Activated CD4-positive, alpha-beta T cell treated with anti-CD3 and anti-CD28 coated beads for 36 hours (primary cell): ENCODE measurements at regions of chr9 and their contacts with region 1.

Region 1: DNA sequence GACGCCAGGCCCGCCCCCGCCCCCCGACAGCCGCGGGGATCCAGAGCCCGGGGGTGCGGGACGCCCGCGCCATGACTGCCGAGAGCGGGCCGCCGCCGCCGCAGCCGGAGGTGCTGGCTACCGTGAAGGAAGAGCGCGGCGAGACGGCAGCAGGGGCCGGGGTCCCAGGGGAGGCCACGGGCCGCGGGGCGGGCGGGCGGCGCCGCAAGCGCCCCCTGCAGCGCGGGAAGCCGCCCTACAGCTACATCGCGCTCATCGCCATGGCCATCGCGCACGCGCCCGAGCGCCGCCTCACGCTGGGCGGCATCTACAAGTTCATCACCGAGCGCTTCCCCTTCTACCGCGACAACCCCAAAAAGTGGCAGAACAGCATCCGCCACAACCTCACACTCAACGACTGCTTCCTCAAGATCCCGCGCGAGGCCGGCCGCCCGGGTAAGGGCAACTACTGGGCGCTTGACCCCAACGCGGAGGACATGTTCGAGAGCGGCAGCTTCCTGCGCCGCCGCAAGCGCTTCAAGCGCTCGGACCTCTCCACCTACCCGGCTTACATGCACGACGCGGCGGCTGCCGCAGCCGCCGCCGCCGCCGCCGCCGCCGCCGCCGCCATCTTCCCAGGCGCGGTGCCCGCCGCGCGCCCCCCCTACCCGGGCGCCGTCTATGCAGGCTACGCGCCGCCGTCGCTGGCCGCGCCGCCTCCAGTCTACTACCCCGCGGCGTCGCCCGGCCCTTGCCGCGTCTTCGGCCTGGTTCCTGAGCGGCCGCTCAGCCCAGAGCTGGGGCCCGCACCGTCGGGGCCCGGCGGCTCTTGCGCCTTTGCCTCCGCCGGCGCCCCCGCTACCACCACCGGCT is 1.0 kb downstream of the FOXE1 start:
- DNase-seq: peak; percentile 85
- ATAC-seq: peak; percentile 88
- H3K4me3 Mint-ChIP-seq: peak overlapping the region; percentile 82
- H3K27ac Mint-ChIP-seq: no peak overlapping the region
- H3K4me1 Mint-ChIP-seq: peaks cover 23% of the 10 kb centered on the region
- H3K27me3 Mint-ChIP-seq: peaks cover 74% of the 10 kb centered on the region

Region 2: GRCh38 chr9:97501177-97501971 is 352.7 kb before region 1 on chr9 and contains the start of gene TMOD1:
- CTCF ChIA-PET with region 1: no interaction called
- POLR2A ChIA-PET with region 1: no interaction called
- intact Hi-C with region 1: loop called in 1 of 2 experiments (anchors 5 kb)
- DNase-seq: peak; percentile 66
- ATAC-seq: peak; percentile 67
- H3K4me3 Mint-ChIP-seq: peak within 1 kb of the TSS; percentile 64
- H3K27ac Mint-ChIP-seq: no peak within 1 kb of the TSS
- H3K4me1 Mint-ChIP-seq: peaks cover 15% of the 10 kb centered on the region
- H3K27me3 Mint-ChIP-seq: peaks cover 45% of the 10 kb centered on the region
- total RNA-seq, gene TMOD1: 1.3 to 1.5 TPM

Region 3: DNA sequence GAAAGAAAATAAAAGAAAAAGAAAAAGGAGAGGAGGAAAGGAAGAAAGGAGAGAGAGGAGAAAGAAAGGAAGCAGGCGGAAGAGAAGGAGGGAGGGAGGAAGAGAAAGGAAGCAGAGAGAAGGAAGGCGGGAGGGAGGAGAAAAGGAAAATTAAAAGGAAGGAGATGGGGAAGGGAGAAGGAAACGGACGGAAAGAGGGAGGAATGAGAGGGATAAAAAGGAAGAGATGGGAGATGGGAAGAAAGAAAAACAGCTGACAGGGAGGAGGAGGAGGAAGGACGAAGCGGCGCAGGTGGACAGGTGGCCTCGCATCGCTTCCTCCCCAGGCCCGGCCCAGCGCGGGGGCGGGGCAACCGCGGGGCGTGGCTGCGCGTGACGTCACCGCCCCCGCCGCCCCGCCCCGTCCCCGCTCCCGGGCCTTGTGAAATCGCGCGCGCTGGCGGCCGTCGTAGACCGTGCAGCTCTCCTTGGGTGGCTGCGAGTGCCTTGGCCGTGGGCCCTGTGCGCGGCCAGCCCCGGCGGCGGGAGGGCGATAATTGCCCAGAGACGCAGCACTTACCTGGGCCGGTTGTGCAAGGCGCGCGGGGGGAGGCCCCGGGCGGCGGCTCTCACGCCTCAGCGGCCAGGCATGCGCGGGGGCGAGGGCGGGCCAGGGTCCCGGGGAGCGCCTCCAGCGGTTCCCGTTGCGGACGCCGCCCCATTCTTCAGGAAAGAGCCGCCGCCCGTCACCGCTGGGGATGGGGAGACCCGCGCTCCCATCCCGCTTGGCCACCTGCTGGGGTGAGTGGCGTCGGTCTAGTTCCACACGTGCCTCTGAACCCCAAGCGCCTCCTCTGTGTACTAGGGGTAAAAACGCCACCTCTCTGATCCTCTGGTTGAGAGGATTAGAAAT is 50.7 kb before region 1 on chr9:
- CTCF ChIA-PET with region 1: no interaction called
- POLR2A ChIA-PET with region 1: no interaction called
- intact Hi-C with region 1: loop called in 1 of 2 experiments (anchors 2 kb)
- DNase-seq: peak; percentile 86
- ATAC-seq: peak; percentile 90
- H3K4me3 Mint-ChIP-seq: peak overlapping the region; percentile 72
- H3K27ac Mint-ChIP-seq: peak overlapping the region; percentile 67
- H3K4me1 Mint-ChIP-seq: peaks cover 10% of the 10 kb centered on the region
- H3K27me3 Mint-ChIP-seq: peaks cover 21% of the 10 kb centered on the region

Region 4: GRCh38 chr9:97900738-97901565 is 46.9 kb after region 1 on chr9:
- CTCF ChIA-PET with region 1: interaction called, 5 read pairs
- POLR2A ChIA-PET with region 1: no interaction called
- intact Hi-C with region 1: loop called (anchors 2 to 5 kb)
- DNase-seq: no peak
- ATAC-seq: no peak
- H3K4me3 Mint-ChIP-seq: no peak overlapping the region
- H3K27ac Mint-ChIP-seq: peak overlapping the region; percentile 56
- H3K4me1 Mint-ChIP-seq: peaks cover 53% of the 10 kb centered on the region
- H3K27me3 Mint-ChIP-seq: no peaks in the 10 kb centered on the region

Region 5: DNA sequence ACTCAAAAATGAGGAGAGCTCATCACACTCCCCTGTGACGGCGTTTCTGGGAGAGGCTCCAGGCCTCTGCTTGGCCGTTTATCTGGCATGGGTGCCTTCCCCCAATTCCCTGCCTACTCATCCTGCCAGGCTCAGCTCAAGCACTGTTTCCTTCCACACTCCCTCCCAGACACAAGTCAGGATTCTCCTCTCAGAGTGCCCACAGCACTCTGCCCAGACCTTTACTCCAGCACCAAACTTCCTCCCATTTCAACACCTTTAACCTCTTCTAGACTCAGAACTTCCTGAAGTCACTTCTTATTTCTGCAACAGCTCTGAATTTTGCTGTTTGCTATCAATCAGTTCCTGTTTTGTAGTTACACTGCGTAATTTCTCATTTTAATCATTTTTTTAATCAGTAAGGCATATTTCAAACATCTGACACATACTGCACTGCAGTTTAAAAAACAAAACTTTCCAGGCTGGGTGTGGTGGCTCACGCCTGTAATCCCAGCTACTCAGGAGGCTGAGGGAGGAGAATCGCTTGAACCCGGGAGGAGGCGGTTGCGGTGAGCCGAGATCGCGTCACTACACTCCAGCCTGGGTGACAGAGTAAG is 52.3 kb after region 1 on chr9:
- CTCF ChIA-PET with region 1: no interaction called
- POLR2A ChIA-PET with region 1: no interaction called
- intact Hi-C with region 1: loop called (anchors 2 to 5 kb)
- DNase-seq: peak; percentile 62
- ATAC-seq: peak; percentile 43
- H3K4me3 Mint-ChIP-seq: peak overlapping the region; percentile 58
- H3K27ac Mint-ChIP-seq: peak overlapping the region; percentile 95
- H3K4me1 Mint-ChIP-seq: peaks cover 76% of the 10 kb centered on the region
- H3K27me3 Mint-ChIP-seq: no peaks in the 10 kb centered on the region